ENCODE measurements at regions of chr5 and their contacts with region 1.

Region 1: GRCh38 chr5:67234671-67235176 is 38.1 kb upstream of the CD180 start:
- DNase-seq: no peak
- H3K4me3 Mint-ChIP-seq: no peak overlapping the region
- H3K27ac Mint-ChIP-seq: no peak overlapping the region
- H3K4me1 Mint-ChIP-seq: peaks cover 6% of the 10 kb centered on the region
- H3K27me3 Mint-ChIP-seq: no peaks in the 10 kb centered on the region

Region 2: GRCh38 chr5:66828548-66829357 is 406.0 kb before region 1 on chr5:
- CTCF ChIA-PET with region 1: no interaction called
- POLR2A ChIA-PET with region 1: no interaction called
- DNase-seq: peak; percentile 79
- H3K4me3 Mint-ChIP-seq: peak overlapping the region; percentile 83
- H3K27ac Mint-ChIP-seq: peak overlapping the region; percentile 89
- H3K4me1 Mint-ChIP-seq: peaks cover 51% of the 10 kb centered on the region
- H3K27me3 Mint-ChIP-seq: no peaks in the 10 kb centered on the region

Region 3: DNA sequence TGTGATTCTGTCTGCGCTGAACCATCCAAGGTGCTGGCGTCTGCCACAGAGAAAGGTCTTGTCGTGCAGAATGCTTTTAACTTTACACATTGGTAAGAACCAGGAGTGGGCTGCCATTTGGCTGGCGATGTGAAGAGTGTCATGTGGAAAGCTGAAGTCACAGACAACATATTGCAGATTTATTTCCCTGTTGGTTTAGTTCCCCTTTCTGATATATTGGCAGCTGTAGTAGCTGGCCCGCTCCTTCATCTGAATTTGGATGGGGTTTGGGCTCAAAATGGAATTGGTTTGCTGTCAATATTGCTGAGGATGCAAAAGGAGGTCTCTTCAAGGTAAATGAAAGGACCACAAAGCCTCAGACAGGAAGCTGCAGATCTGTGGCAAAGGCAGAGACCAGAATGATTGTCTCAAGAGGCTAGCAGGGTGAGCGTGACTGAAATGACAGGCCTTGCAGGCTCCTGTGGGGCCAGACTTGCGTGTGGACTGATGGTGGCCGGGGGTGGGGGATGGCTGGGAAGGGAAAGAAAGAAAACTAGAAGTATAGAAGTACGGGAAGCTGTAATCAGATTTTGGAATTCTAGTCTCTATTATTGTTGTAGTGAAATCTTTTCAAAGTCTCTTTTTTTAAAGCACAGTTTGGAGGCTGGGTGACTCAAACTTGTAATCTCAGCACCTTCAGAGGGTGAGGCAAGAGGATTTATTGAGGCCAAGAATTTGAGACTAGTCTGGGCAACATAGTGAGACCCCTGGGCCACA is 13.1 kb before region 1 on chr5:
- CTCF ChIA-PET with region 1: interaction called, 10 read pairs
- POLR2A ChIA-PET with region 1: no interaction called
- DNase-seq: peak; percentile 76
- H3K4me3 Mint-ChIP-seq: peak overlapping the region; percentile 57
- H3K27ac Mint-ChIP-seq: peak overlapping the region; percentile 97
- H3K4me1 Mint-ChIP-seq: peaks cover 61% of the 10 kb centered on the region
- H3K27me3 Mint-ChIP-seq: no peaks in the 10 kb centered on the region

Measured in activated CD4-positive, alpha-beta T cell treated with anti-CD3 and anti-CD28 coated beads, Interleukin-2, amount 10 ng/mL, durations not matched to agents 7 days and 5 days (primary cell).